Activated B cell treated with CpG ODN at 0.5 μM for 24 hours (primary cell): ENCODE measurements at regions of chr15 and their contacts with region 1.

Region 1: GRCh38 chr15:61921093-61921492 is 139.2 kb downstream of the VPS13C start:
- DNase-seq: no peak
- ATAC-seq: no peak
- H3K4me3 Mint-ChIP-seq: no peak overlapping the region
- H3K27ac Mint-ChIP-seq: no peak overlapping the region
- H3K4me1 Mint-ChIP-seq: no peaks in the 10 kb centered on the region
- H3K27me3 Mint-ChIP-seq: no peaks in the 10 kb centered on the region
- CTCF ChIP-seq: no peak

Region 2: GRCh38 chr15:61598655-61599054 is 322.4 kb before region 1 on chr15:
- CTCF ChIA-PET with region 1: no interaction called
- POLR2A ChIA-PET with region 1: no interaction called
- intact Hi-C with region 1: no loop called
- DNase-seq: no peak
- ATAC-seq: no peak
- H3K4me3 Mint-ChIP-seq: no peak overlapping the region
- H3K27ac Mint-ChIP-seq: no peak overlapping the region
- H3K4me1 Mint-ChIP-seq: no peaks in the 10 kb centered on the region
- H3K27me3 Mint-ChIP-seq: no peaks in the 10 kb centered on the region
- CTCF ChIP-seq: no peak

Region 3: GRCh38 chr15:61951949-61952348 is 30.9 kb after region 1 on chr15:
- CTCF ChIA-PET with region 1: no interaction called
- POLR2A ChIA-PET with region 1: no interaction called
- intact Hi-C with region 1: loop called (anchors 5 kb)
- DNase-seq: no peak
- ATAC-seq: no peak
- H3K4me3 Mint-ChIP-seq: no peak overlapping the region
- H3K27ac Mint-ChIP-seq: no peak overlapping the region
- H3K4me1 Mint-ChIP-seq: no peaks in the 10 kb centered on the region
- H3K27me3 Mint-ChIP-seq: no peaks in the 10 kb centered on the region
- CTCF ChIP-seq: no peak

Region 4: GRCh38 chr15:62135532-62136134 is 214.5 kb after region 1 on chr15:
- CTCF ChIA-PET with region 1: no interaction called
- POLR2A ChIA-PET with region 1: no interaction called
- intact Hi-C with region 1: no loop called
- DNase-seq: no peak
- ATAC-seq: no peak
- H3K4me3 Mint-ChIP-seq: no peak overlapping the region
- H3K27ac Mint-ChIP-seq: no peak overlapping the region
- H3K4me1 Mint-ChIP-seq: no peaks in the 10 kb centered on the region
- H3K27me3 Mint-ChIP-seq: peaks cover 8% of the 10 kb centered on the region
- CTCF ChIP-seq: no peak